HepG2 (cell line): ENCODE measurements at regions of chr14 and their contacts with region 1.

Region 1: GRCh38 chr14:99266181-99267178 is 5.5 kb downstream of the BCL11B start:
- DNase-seq: peak; percentile 24
- ATAC-seq: peak; percentile 85
- H3K4me3 ChIP-seq: no peak overlapping the region
- H3K27ac ChIP-seq: no peak overlapping the region
- H3K4me1 ChIP-seq: peaks cover 3% of the 10 kb centered on the region
- H3K27me3 ChIP-seq: peaks cover 8 to 72% of the 10 kb centered on the region in 2 experiments
- CTCF ChIP-seq: peak; percentile 94
- EP300 ChIP-seq: no peak
- POLR2A ChIP-seq: no peak
- RAD21 ChIP-seq: peak; percentile 92

Region 2: GRCh38 chr14:97299661-97300060 is 1966.8 kb before region 1 on chr14:
- CTCF ChIA-PET with region 1: no interaction called
- POLR2A ChIA-PET with region 1: no interaction called
- in situ Hi-C with region 1: no loop called
- intact Hi-C with region 1: loop called (anchors 10 kb)
- DNase-seq: no peak
- ATAC-seq: no peak
- H3K4me3 ChIP-seq: no peak overlapping the region
- H3K27ac ChIP-seq: no peak overlapping the region
- H3K4me1 ChIP-seq: no peaks in the 10 kb centered on the region
- H3K27me3 ChIP-seq: no peaks in the 10 kb centered on the region; a peak in 2 of 5 replicates
- CTCF ChIP-seq: peak; percentile 28
- EP300 ChIP-seq: no peak
- POLR2A ChIP-seq: no peak
- RAD21 ChIP-seq: no peak

Region 3: DNA sequence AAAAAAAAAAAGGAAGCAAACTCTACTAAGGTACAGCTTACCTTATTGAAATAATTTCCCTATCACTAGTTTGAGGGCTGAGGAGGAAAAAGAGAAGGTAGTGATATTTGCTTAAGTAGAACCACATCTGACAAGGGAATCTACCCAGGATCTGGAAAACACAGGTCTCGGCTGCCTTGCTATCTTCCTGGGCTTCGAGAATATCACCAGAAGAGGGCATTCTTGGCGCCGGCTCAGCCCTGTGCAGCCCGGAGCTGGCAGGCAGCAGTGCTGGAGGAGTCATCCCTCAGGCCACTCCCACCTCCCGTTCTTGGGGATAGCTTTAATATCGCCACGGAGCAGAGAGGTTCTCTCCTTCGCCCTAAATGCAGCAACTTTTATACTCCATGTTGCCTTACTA is 1288.1 kb before region 1 on chr14:
- CTCF ChIA-PET with region 1: no interaction called
- POLR2A ChIA-PET with region 1: no interaction called
- in situ Hi-C with region 1: loop called (anchors 25 kb)
- intact Hi-C with region 1: loop called (anchors 5 kb)
- DNase-seq: no peak
- ATAC-seq: peak; percentile 92
- H3K4me3 ChIP-seq: no peak overlapping the region
- H3K27ac ChIP-seq: no peak overlapping the region
- H3K4me1 ChIP-seq: no peaks in the 10 kb centered on the region
- H3K27me3 ChIP-seq: no peaks in the 10 kb centered on the region
- CTCF ChIP-seq: peak; percentile 49
- EP300 ChIP-seq: no peak
- POLR2A ChIP-seq: no peak
- RAD21 ChIP-seq: no peak

Region 4: GRCh38 chr14:98138666-98139065 is 1127.8 kb before region 1 on chr14:
- CTCF ChIA-PET with region 1: no interaction called
- POLR2A ChIA-PET with region 1: no interaction called
- in situ Hi-C with region 1: loop called (anchors 25 kb)
- intact Hi-C with region 1: loop called (anchors 5 kb)
- DNase-seq: no peak
- ATAC-seq: no peak
- H3K4me3 ChIP-seq: no peak overlapping the region
- H3K27ac ChIP-seq: no peak overlapping the region
- H3K4me1 ChIP-seq: no peaks in the 10 kb centered on the region
- H3K27me3 ChIP-seq: no peaks in the 10 kb centered on the region
- CTCF ChIP-seq: peak; percentile 40
- EP300 ChIP-seq: no peak
- POLR2A ChIP-seq: no peak
- RAD21 ChIP-seq: no peak

Region 5: GRCh38 chr14:99004135-99004534 is 262.3 kb before region 1 on chr14:
- CTCF ChIA-PET with region 1: no interaction called
- POLR2A ChIA-PET with region 1: no interaction called
- in situ Hi-C with region 1: no loop called
- intact Hi-C with region 1: no loop called
- DNase-seq: no peak
- ATAC-seq: no peak
- H3K4me3 ChIP-seq: no peak overlapping the region
- H3K27ac ChIP-seq: no peak overlapping the region
- H3K4me1 ChIP-seq: no peaks in the 10 kb centered on the region
- H3K27me3 ChIP-seq: peaks cover 2 to 14% of the 10 kb centered on the region in 2 experiments; a peak in 2 of 5 replicates
- CTCF ChIP-seq: no peak
- EP300 ChIP-seq: no peak
- POLR2A ChIP-seq: no peak
- RAD21 ChIP-seq: no peak

Region 6: DNA sequence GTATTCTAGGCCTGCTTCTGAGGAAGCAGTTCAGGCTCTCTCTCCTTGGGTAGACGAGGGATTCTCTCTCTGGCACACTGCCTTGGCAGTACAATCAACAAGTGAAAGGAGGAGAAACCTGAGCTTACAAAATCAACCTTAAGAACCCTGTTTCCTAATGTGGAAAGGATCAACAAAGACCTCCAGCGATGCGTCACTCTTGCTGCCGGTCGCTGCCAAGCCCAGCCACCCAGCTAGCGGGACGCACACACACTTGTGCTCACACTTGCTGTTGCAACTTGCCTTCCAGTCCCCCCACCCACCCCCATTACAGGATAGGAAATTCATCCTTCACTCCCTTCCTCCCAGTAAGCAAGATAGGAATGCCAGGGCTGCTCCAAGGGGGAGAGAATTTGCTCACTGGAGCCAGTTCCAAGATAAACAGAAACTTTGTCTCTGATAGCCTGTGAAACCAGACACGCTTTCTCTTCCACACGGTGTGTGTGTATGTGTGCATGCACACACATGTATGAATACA is 138.8 kb before region 1 on chr14:
- CTCF ChIA-PET with region 1: no interaction called
- POLR2A ChIA-PET with region 1: no interaction called
- in situ Hi-C with region 1: loop called (anchors 10 kb)
- intact Hi-C with region 1: no loop called
- DNase-seq: no peak
- ATAC-seq: no peak
- H3K4me3 ChIP-seq: no peak overlapping the region
- H3K27ac ChIP-seq: no peak overlapping the region
- H3K4me1 ChIP-seq: 0 out of 2 replicates have a peak, but pooled peaks cover 8% of the 10 kb centered on the region
- H3K27me3 ChIP-seq: peaks cover under 1 to 11% of the 10 kb centered on the region in 2 experiments; a peak in 2 of 5 replicates
- CTCF ChIP-seq: no peak
- EP300 ChIP-seq: no peak
- POLR2A ChIP-seq: no peak
- RAD21 ChIP-seq: no peak

Region 7: GRCh38 chr14:99215277-99215676 is 51.2 kb before region 1 on chr14:
- CTCF ChIA-PET with region 1: no interaction called
- POLR2A ChIA-PET with region 1: no interaction called
- in situ Hi-C with region 1: no loop called
- intact Hi-C with region 1: no loop called
- DNase-seq: no peak
- ATAC-seq: no peak
- H3K4me3 ChIP-seq: no peak overlapping the region
- H3K27ac ChIP-seq: no peak overlapping the region
- H3K4me1 ChIP-seq: no peaks in the 10 kb centered on the region
- H3K27me3 ChIP-seq: peaks cover 2 to 48% of the 10 kb centered on the region in 2 experiments; a peak in 4 of 5 replicates
- CTCF ChIP-seq: no peak
- EP300 ChIP-seq: no peak
- POLR2A ChIP-seq: no peak
- RAD21 ChIP-seq: no peak

Region 8: DNA sequence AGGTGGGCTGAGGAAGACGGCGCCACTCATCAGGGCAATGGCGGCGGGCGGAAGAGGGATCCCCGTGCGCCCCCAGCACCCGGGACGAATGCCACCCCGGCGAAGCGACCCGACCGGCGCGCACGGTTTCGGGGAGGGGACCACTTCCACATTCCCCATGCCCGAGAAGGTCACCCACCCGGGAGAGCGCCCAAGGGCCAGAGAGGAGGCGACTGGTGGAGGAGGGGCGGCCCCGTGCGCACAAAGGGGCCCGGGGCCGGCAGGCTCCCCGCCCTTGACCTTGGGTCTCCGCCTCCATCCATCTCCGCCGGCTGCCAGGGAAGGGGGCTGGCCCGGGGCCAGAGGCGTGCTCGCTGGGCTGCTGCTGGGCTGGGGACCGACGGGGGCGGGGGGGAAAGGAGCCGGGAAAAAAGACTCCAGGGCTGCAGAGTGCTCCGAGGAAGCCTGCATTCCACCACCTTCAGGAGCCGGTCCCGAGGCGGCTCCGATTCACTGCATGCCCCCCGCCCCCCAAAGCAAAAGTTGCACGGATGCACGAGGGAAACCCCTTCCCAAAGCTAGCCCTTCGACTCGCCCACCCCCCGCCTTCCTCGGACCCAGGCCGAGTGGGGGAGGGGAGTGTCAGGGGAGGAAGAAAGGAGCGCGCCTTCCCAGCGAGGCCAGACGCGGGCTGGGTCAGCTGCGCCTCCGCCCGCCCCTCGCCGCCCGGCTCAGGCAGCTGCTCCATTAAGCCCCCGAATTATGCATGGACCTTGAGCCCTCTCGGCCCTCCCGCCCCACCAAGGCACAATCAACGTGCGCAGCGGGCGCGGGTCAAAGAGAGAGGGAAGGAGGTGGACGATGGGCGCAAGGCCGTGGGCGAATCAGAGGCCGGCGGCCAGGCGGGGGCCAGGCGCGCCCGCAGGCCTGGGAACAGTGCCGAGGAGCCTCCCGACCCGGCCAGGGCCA is 20.6 kb before region 1 on chr14:
- CTCF ChIA-PET with region 1: no interaction called
- POLR2A ChIA-PET with region 1: no interaction called
- in situ Hi-C with region 1: no loop called
- intact Hi-C with region 1: no loop called
- DNase-seq: no peak
- ATAC-seq: peak; percentile 45; the same call in 2 of the 3 replicates
- H3K4me3 ChIP-seq: peak overlapping the region in 1 of 3 experiments; percentile 16; a peak in 1 of 6 replicates
- H3K27ac ChIP-seq: no peak overlapping the region
- H3K4me1 ChIP-seq: no peaks in the 10 kb centered on the region
- H3K27me3 ChIP-seq: peaks cover 4 to 71% of the 10 kb centered on the region in 2 experiments
- CTCF ChIP-seq: no peak
- EP300 ChIP-seq: no peak
- POLR2A ChIP-seq: no peak
- RAD21 ChIP-seq: no peak

Region 9: DNA sequence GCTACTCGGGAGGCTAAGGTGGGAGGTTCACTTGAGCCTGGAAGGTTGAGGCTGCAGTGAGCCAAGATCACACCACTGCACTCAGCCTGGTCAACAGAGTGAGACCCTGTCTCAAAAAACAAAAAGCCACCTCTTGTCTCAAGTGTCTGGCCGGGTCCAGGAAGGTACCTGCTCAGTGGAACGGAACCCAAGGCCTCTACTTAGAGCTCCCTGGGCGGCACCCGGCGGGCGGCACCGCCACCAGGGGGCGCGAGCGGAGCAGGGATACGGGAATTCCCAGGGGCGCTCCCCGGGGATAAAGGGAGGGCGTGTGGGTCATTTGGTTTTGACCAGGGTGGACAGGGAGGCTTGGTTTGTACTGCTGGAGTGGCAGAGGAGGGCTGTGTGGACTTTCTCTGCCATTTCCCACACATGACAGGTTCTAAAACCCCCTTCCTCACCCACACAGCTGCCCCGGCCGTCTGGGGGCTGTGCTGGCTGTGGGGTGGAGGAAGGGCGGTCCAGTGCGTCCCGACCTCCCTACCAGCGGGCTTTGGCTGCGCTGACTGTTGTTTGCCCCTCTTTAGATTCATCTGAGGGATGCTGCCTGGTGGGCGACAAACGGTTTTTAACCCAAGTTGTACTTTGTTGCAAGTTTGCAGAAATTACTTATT is 122.8 kb after region 1 on chr14:
- CTCF ChIA-PET with region 1: no interaction called
- POLR2A ChIA-PET with region 1: no interaction called
- in situ Hi-C with region 1: no loop called
- intact Hi-C with region 1: no loop called
- DNase-seq: peak; percentile 21
- ATAC-seq: peak; percentile 83
- H3K4me3 ChIP-seq: peak overlapping the region in 1 of 3 experiments; percentile 40; a peak in 1 of 6 replicates
- H3K27ac ChIP-seq: no peak overlapping the region
- H3K4me1 ChIP-seq: peaks cover 20% of the 10 kb centered on the region
- H3K27me3 ChIP-seq: peaks cover 3 to 18% of the 10 kb centered on the region in 2 experiments; a peak in 4 of 5 replicates
- CTCF ChIP-seq: no peak; the same call in none of the 2 replicates
- EP300 ChIP-seq: no peak
- POLR2A ChIP-seq: no peak
- RAD21 ChIP-seq: no peak